Activated naive CD8-positive, alpha-beta T cell treated with anti-CD3 and anti-CD28 coated beads, Interleukin-2, amount 10 ng/mL, durations not matched to agents 7 days and 5 days (primary cell): ENCODE measurements at regions of chr2 and their contacts with region 1.

Region 1: DNA sequence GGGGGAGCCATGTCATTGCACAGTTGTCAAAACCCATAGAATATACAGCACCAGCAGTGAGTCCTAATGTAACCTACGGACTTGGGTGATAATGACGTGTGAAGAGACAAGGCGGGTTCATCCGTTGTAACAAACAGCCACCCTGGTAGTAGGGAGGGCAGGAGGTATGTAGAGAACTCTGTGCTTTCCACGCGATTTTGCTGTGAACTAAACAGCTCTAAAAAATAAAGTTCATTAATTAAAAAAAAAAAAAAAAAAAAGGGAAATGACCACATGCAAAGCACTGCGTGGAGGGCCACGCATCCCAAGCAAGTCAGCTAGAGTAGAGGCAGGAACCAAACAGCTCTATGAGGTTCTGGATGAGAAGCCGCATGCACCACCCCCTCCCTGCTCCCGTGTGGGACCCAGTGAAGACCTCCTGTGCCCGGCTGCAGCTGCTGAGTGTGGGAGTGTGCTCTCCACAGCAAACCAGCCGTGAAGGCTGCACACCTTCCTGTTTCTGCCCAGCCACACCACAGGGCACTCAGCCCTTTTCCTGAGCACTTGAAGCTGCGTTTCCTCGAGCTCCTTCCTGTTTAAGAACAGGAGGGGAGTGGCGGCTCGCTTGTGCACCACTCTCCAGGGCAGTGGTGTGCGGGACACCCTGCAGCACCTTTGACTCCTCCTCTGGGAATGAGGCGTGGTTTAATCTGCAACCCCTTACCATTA is 65.6 kb downstream of the ODC1 start:
- DNase-seq: peak; percentile 52
- ATAC-seq: peak; percentile 70
- H3K4me3 Mint-ChIP-seq: peak overlapping the region; percentile 70
- H3K27ac Mint-ChIP-seq: peak overlapping the region; percentile 55
- H3K4me1 Mint-ChIP-seq: peaks cover 69% of the 10 kb centered on the region
- H3K27me3 Mint-ChIP-seq: peaks cover 2% of the 10 kb centered on the region

Region 2: DNA sequence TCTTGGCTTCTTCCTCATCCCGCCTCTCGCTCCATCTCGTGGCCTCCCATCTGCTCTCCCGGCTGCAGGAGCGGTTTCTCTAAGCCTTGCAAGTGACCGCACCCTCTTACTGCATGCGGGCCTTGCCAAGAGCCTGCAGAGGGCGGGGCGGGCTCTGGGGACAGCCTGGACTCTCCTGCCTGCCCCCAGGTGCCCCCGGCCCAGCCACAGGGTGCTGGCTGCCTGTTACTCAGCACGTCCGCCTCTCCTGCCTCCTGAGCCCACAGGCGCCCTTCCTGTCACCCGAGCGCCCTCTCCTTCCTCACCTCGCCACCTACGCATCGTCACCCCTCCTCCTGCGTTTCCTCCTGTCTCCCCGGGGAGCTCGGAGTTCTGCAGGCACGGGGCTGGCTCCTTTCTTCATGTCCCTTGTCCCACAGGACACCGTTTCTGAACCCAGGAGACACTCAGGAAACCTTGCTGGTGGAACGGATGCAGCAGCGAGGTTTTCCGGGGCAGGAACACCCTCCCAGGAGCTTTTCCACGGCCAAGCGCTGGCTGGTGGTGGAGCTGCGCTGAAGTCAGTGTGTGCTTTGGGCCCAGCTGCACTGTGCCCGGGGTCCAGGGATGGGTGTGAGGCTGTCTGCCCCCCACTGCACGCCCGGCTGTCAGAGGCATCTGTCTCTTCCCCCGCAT is 51.3 kb before region 1 on chr2:
- POLR2A ChIA-PET with region 1: interaction called, 11 read pairs
- DNase-seq: peak; percentile 74
- ATAC-seq: peak; percentile 72
- H3K4me3 Mint-ChIP-seq: peak overlapping the region; percentile 91
- H3K27ac Mint-ChIP-seq: peak overlapping the region; percentile 94
- H3K4me1 Mint-ChIP-seq: peaks cover 50% of the 10 kb centered on the region
- H3K27me3 Mint-ChIP-seq: no peaks in the 10 kb centered on the region

Region 3: GRCh38 chr2:10659898-10660568 is 277.5 kb after region 1 on chr2:
- POLR2A ChIA-PET with region 1: no interaction called
- DNase-seq: peak; percentile 57
- ATAC-seq: peak; percentile 49
- H3K4me3 Mint-ChIP-seq: no peak overlapping the region
- H3K27ac Mint-ChIP-seq: no peak overlapping the region
- H3K4me1 Mint-ChIP-seq: peaks cover 10% of the 10 kb centered on the region
- H3K27me3 Mint-ChIP-seq: no peaks in the 10 kb centered on the region